ENCODE measurements at regions of chr6 and their contacts with region 1.

Region 1: DNA sequence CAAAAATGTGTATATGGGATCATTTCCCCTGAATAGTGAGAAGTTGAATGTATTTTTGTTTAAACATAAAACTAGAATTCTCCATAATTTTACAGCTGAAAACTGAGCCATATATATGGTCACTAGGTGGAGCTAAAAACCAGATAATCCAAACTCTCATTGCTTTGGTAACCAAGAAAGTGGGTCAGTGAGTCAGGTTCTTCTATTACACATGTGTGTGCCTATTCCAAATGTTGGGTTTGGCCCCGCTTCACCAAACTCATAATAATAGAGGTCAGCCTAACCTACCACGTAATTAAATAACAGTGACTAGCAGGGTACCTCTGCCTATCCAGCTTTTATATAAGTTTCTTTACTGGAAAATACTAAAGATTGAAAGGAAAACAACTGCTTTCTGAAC is 19.3 kb upstream of the RNGTT start:
- DNase-seq: peak; percentile 90
- H3K4me3 Mint-ChIP-seq: no peak overlapping the region
- H3K27ac Mint-ChIP-seq: no peak overlapping the region
- H3K4me1 Mint-ChIP-seq: no peaks in the 10 kb centered on the region
- H3K27me3 Mint-ChIP-seq: no peaks in the 10 kb centered on the region
- CTCF ChIP-seq: peak; percentile 82

Region 2: GRCh38 chr6:88823998-88824397 is 158.7 kb before region 1 on chr6:
- CTCF ChIA-PET with region 1: no interaction called
- POLR2A ChIA-PET with region 1: no interaction called
- intact Hi-C with region 1: no loop called
- DNase-seq: peak; percentile 37
- H3K4me3 Mint-ChIP-seq: no peak overlapping the region
- H3K27ac Mint-ChIP-seq: no peak overlapping the region
- H3K4me1 Mint-ChIP-seq: no peaks in the 10 kb centered on the region
- H3K27me3 Mint-ChIP-seq: no peaks in the 10 kb centered on the region
- CTCF ChIP-seq: no peak

Region 3: DNA sequence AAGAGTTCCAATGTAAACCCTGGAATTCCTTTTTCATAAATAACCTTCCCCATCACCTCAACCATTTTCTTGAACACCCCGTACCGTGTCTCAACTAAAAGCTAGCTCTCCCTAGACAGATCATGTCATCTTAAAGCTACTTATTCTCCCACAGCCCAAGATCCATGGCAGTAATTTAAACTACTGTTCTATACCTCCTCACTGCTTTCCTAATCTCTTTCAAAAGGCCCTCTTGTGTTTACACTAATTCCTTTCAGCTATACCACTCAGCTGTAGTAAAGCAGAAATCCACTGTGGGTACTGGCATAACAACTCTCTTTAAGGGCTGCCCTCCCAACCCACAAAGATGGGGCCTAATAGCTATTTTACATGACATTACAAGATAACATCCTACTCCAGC is 86.8 kb before region 1 on chr6:
- CTCF ChIA-PET with region 1: no interaction called
- POLR2A ChIA-PET with region 1: no interaction called
- intact Hi-C with region 1: no loop called
- DNase-seq: no peak
- H3K4me3 Mint-ChIP-seq: no peak overlapping the region
- H3K27ac Mint-ChIP-seq: no peak overlapping the region
- H3K4me1 Mint-ChIP-seq: peaks cover 7% of the 10 kb centered on the region
- H3K27me3 Mint-ChIP-seq: no peaks in the 10 kb centered on the region
- CTCF ChIP-seq: no peak

Region 4: DNA sequence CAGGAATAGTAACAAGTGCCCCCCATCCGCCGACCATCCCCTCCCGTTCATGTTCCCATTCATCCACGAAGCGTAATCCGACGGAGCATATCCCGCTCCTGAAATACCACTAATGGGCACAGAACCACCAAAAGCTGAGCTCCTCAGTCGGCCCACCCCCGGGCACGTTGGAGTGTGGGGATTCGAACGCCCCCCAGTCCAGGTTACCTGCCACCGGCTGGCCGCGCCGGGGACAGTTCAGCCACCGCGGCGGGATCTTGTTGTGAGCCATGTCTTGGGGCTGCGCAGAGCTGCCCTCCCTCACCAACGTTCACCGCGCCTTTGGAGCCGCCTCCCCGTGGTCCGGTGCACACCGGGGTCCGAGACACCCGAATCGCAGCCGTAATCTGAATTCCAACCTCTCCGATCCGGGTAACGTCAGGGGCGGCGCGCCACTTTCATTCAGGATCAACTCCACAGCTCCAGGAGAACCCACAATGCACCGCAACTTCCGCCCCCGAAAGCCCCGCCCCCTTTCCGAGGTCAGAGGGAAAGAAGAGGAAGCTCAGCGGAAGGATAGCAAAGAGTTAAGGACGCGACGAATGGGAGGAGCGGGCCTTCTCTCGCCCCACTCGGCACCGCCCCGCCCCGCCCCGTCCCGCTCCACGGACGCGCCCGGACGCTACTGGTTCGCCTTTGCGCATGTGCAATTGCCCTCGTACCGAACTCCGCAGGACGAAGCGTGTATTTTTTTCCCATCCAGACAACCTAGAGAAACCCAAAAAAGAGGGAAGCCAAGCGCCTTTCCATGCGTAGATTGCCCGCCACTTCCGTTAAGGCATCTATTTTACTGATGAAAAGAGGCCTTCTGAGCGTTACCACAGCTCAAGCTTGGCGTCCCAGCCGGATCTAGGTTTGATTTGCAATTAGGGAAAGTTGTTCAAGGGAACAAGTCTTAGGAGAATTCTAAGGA is 19.3 kb before region 1 on chr6 and contains the start of gene RNGTT:
- CTCF ChIA-PET with region 1: interaction called, 5 read pairs
- POLR2A ChIA-PET with region 1: interaction called, 11 read pairs
- intact Hi-C with region 1: no loop called
- DNase-seq: peak; percentile 99
- H3K4me3 Mint-ChIP-seq: peak within 1 kb of the TSS; percentile 93
- H3K27ac Mint-ChIP-seq: peak within 1 kb of the TSS; percentile 92
- H3K4me1 Mint-ChIP-seq: peaks cover 14% of the 10 kb centered on the region
- H3K27me3 Mint-ChIP-seq: no peaks in the 10 kb centered on the region
- CTCF ChIP-seq: no peak
- total RNA-seq, gene RNGTT: 14.6 and 20.6 TPM in 2 replicates

Region 5: DNA sequence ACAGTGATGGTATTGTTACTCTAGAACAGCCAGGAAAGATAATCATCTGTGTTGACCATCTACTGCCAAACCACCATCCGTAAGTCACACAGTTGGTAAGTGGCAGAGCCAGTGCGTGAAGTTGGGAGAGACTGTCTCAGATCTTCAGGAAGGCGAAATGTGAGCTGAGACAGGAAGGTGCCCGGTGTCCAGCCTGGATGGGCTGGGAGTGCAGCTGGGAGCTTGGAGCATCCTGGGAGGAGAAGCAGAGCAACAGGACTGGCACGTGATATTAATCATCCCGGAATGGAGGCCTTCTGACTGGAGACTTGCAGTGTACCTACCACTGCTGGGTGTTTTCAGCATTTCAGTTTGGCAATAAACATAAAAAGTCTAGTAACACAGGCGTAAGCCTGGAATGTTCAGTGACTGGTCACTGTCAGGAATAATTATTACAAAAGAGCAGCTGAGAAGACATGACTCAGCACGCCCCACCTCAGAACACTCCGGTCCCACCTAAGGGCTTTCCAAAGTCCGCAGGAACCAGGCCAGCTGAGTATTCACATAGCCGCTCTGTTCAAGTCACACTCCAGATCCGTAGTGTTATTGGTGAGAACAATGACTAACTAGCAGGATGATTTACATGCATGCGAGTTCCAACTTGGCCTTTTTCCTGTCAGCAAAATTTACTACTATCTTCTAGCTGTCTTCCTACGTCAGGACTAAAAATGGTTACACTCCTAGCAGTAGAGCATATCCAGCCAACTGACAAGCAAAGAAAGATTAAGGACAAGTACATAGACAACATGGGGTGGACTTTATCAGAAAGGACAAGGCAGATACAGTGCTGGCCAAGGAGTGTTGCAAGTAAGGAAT is 52.8 kb after region 1 on chr6:
- CTCF ChIA-PET with region 1: interaction called, 11 read pairs
- POLR2A ChIA-PET with region 1: interaction called, 43 read pairs
- intact Hi-C with region 1: loop called (anchors 1 kb)
- DNase-seq: peak; percentile 100
- H3K4me3 Mint-ChIP-seq: peak overlapping the region; percentile 47
- H3K27ac Mint-ChIP-seq: peak overlapping the region; percentile 95
- H3K4me1 Mint-ChIP-seq: peaks cover 21% of the 10 kb centered on the region
- H3K27me3 Mint-ChIP-seq: no peaks in the 10 kb centered on the region
- CTCF ChIP-seq: no peak

Region 6: GRCh38 chr6:89080542-89081422 is 98.1 kb after region 1 on chr6 and contains the start of gene PNRC1:
- CTCF ChIA-PET with region 1: interaction called, 60 read pairs
- POLR2A ChIA-PET with region 1: interaction called, 165 read pairs
- intact Hi-C with region 1: loop called (anchors 1 kb)
- DNase-seq: peak; percentile 99
- H3K4me3 Mint-ChIP-seq: peak within 1 kb of the TSS; percentile 96
- H3K27ac Mint-ChIP-seq: peak within 1 kb of the TSS; percentile 92
- H3K4me1 Mint-ChIP-seq: peaks cover 19% of the 10 kb centered on the region
- H3K27me3 Mint-ChIP-seq: no peaks in the 10 kb centered on the region
- CTCF ChIP-seq: no peak
- total RNA-seq, gene PNRC1: 158 and 183 TPM in 2 replicates

Region 7: DNA sequence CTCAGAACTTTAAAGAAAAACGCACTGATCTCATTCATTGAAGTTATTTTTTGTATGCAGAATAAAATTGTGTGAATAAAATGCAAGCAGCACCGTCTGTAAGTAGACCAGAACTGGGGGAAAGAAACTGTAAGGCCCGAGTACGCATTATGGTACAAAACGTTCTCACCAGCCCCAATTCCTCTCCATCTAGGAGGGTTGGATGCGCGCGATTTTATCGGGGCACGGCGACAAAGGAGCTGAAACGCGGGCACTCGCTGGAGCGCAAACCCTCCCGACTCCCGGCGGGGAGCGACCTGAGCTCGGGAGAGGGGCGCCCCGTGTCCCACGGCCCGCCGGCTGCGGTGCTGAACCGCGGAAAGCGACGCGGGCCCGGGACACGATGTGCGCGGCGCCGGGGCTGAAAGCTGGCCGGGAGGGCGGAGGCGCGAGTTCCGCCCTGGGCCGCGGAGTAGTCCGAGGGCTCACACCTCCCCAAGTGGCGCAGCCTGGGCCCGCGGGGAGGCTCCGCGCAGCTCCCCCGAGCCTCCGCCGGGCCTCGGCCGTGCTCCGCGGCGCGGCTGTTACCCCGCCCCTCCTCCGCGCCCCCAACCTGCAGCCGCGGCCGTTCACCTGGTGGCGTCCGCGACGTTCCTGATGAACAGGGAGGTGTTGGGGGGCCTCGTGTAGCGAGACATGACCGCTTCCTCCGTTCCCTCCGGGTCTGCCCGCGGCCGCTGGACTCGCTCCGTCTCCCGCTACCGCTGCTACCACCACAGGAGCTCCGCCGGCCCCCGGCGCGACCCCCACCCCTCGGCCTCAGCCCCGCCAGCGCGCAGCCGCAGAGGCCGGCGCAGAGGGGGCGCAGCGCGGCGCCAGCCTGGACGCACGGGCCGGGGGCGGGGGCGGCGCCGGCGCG is 134.7 kb after region 1 on chr6 and contains the start of gene SRSF12:
- CTCF ChIA-PET with region 1: interaction called, 38 read pairs
- POLR2A ChIA-PET with region 1: interaction called, 8 read pairs
- intact Hi-C with region 1: loop called (anchors 1 kb)
- DNase-seq: peak; percentile 34
- H3K4me3 Mint-ChIP-seq: peak within 1 kb of the TSS; percentile 79
- H3K27ac Mint-ChIP-seq: no peak within 1 kb of the TSS
- H3K4me1 Mint-ChIP-seq: no peaks in the 10 kb centered on the region
- H3K27me3 Mint-ChIP-seq: no peaks in the 10 kb centered on the region
- CTCF ChIP-seq: no peak
- total RNA-seq, gene SRSF12: 1.1 and 1.2 TPM in 2 replicates

Region 8: DNA sequence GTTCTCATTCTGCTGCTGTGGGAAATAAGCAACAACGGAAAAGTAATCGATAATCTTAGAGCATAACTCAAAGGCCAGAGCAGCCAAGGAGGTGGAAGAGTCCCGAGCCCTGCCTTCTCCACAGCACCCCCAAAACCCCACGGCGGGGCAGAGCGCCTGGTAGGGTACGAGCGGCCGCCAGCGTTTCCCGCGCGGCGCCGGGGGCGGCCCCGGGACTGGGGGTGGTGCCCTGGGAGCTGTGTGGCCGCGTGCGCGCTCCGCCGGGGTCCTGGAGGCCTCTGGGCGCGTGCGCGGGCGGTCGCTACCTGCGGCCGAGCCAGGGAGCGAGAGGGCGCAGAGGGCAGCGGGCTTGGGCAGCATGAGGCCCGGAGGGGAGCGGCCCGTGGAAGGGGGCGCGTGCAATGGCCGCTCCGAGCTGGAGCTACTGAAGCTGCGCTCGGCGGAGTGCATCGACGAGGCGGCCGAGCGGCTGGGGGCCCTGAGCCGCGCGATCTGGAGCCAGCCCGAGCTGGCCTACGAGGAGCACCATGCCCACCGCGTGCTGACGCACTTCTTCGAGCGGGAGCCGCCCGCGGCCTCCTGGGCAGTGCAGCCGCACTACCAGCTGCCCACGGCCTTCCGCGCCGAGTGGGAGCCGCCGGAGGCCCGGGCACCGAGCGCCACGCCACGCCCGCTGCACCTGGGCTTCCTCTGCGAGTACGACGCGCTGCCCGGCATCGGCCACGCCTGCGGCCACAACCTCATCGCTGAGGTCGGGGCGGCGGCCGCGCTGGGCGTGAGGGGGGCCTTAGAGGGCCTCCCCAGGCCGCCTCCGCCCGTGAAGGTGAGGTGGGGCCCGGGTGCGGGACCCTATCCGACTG is 163.3 kb after region 1 on chr6 and contains the start of gene PM20D2:
- CTCF ChIA-PET with region 1: interaction called, 6 read pairs
- POLR2A ChIA-PET with region 1: interaction called, 21 read pairs
- intact Hi-C with region 1: loop called (anchors 1 kb)
- DNase-seq: peak; percentile 69
- H3K4me3 Mint-ChIP-seq: peak within 1 kb of the TSS; percentile 80
- H3K27ac Mint-ChIP-seq: peak within 1 kb of the TSS; percentile 87
- H3K4me1 Mint-ChIP-seq: peaks cover 22% of the 10 kb centered on the region
- H3K27me3 Mint-ChIP-seq: no peaks in the 10 kb centered on the region
- CTCF ChIP-seq: no peak
- total RNA-seq, gene PM20D2: 9.9 and 11.9 TPM in 2 replicates

Region 9: GRCh38 chr6:89200706-89201215 is 218.0 kb after region 1 on chr6:
- CTCF ChIA-PET with region 1: no interaction called
- POLR2A ChIA-PET with region 1: no interaction called
- intact Hi-C with region 1: no loop called
- DNase-seq: no peak
- H3K4me3 Mint-ChIP-seq: no peak overlapping the region
- H3K27ac Mint-ChIP-seq: no peak overlapping the region
- H3K4me1 Mint-ChIP-seq: no peaks in the 10 kb centered on the region
- H3K27me3 Mint-ChIP-seq: peaks cover 9% of the 10 kb centered on the region
- CTCF ChIP-seq: no peak

Region 10: DNA sequence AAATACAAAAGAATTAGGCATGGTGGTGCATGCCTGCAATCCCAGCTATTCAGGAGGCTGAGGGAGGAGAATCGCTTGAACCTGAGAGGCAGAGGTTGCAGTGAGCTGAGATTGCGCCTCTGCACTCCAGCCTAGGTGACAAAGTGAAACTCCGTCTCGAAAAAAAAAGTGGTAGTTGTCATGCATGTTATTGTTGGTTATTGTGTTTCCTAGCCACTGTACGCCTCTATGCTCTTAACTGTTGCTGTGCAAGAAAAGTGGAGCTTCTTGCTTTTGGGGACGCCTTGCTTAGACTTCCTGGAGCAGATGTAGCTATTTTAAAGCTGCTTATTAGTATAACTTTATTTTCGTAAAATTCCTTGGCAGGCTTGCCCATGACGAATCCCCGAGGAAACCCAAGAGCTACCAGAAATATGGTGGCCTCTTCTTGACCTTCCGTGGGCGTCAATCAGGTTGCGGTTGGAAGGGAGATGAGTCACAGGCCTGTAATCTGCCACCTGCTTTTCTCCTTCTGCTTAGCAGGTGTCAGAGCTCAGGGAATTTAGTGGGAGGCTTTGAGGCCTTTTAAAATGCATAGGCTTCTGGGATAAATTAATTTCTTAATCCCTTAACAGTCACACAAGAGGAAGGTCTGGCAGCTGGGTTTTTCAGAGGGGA is 315.1 kb after region 1 on chr6:
- CTCF ChIA-PET with region 1: no interaction called
- POLR2A ChIA-PET with region 1: no interaction called
- intact Hi-C with region 1: loop called (anchors 1 kb)
- DNase-seq: peak; percentile 99
- H3K4me3 Mint-ChIP-seq: peak overlapping the region; percentile 59
- H3K27ac Mint-ChIP-seq: peak overlapping the region; percentile 68
- H3K4me1 Mint-ChIP-seq: peaks cover 7% of the 10 kb centered on the region
- H3K27me3 Mint-ChIP-seq: peaks cover 46% of the 10 kb centered on the region
- CTCF ChIP-seq: no peak

Measured in MCF 10A (cell line).